ENCODE measurements at regions of chr7 and their contacts with region 1.

Region 1: GRCh38 chr7:101542527-101543241 is 86.4 kb downstream of the MYL10 start:
- DNase-seq: peak; percentile 63 to 93
- H3K4me3 ChIP-seq: no peak overlapping the region
- CTCF ChIP-seq: peak in 1 of 3 donors; percentile 79
- POLR2A ChIP-seq: no peak

Region 2: GRCh38 chr7:101378751-101379184 is 163.9 kb before region 1 on chr7:
- intact Hi-C with region 1: loop called (anchors 10 kb)
- DNase-seq: no peak
- H3K4me3 ChIP-seq: no peak overlapping the region
- CTCF ChIP-seq: no peak
- POLR2A ChIP-seq: no peak

Region 3: GRCh38 chr7:102272075-102272917 is 729.6 kb after region 1 on chr7:
- intact Hi-C with region 1: loop called (anchors 2 kb)
- DNase-seq: peak; percentile 45 to 94
- H3K4me3 ChIP-seq: no peak overlapping the region
- CTCF ChIP-seq: peak in 1 of 3 donors; percentile 72
- POLR2A ChIP-seq: no peak